ENCODE measurements at regions of chr4 and their contacts with region 1.

Region 1: DNA sequence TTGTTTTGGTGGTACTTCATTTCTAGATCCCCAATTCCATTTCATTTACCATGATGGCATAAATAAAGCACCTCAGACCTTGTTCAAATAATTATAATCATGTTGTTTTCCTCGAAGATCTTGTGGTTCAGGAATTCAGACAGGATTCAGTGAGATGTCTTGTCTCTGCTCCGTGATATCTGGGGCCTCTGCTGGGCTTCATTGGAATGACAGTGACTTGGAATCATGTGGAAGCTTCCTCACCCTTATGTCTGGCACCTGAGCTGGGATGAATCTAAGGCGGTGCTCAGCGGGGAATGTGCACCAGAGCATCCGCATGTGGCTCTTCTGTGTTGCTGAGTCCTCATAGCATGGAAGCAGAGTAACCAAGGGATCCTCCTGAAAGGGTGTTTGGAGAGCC is 132.2 kb downstream of the VEGFC start:
- DNase-seq: no peak

Region 2: GRCh38 chr4:176593943-176594342 is 66.6 kb before region 1 on chr4:
- in situ Hi-C with region 1: loop called (anchors 5 kb)
- DNase-seq: no peak

Region 3: GRCh38 chr4:176939445-176939844 is 278.9 kb after region 1 on chr4:
- in situ Hi-C with region 1: no loop called
- DNase-seq: no peak

Measured in G401 (cell line).